CD4-positive, alpha-beta memory T cell (primary cell): ENCODE measurements at regions of chr11 and their contacts with region 1.

Region 1: DNA sequence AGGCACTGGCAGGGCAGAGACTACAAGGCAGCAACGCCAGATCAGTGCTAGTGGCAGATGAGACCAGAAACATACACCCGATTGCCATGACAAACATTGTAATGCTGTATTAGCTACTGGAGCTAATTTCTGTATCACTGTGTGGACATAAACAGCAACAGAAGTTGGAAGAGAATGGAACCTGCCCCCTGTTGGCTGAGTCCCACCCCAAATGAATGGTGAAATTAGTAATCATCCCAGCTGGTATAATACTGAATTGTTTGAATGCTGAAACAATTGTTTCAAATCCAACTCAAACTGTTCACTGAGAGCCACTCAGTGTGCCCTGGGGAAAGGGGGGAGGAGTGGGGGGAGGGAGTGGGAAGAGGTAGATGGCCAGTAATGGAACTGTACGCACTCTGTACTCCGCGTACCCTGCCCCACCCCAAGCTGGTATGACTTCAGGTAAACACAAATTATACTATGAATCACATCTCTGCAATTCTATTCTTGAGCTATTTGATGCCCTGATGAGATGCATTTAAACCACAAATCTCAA is 11.2 kb upstream of the BIRC3 start:
- DNase-seq: peak in 3 of 5 donors; percentile 35 to 74 (median 40)
- H3K4me3 ChIP-seq: peak overlapping the region; percentile 3 to 14
- H3K4me3 Mint-ChIP-seq: peak overlapping the region; percentile 51 to 77 (median 69)
- H3K27ac ChIP-seq: peak overlapping the region; percentile 60
- H3K27ac Mint-ChIP-seq: peak overlapping the region; percentile 84 to 98 (median 94)
- H3K4me1 ChIP-seq: peaks cover 87% of the 10 kb centered on the region
- H3K4me1 Mint-ChIP-seq: peaks cover 54 to 85% (median 73%) of the 10 kb centered on the region in 4 donors
- H3K27me3 ChIP-seq: no peaks in the 10 kb centered on the region
- H3K27me3 Mint-ChIP-seq: no peaks in the 10 kb centered on the region

Region 2: GRCh38 chr11:102279641-102280170 is 26.4 kb before region 1 on chr11:
- CTCF ChIA-PET with region 1: no interaction called
- POLR2A ChIA-PET with region 1: no interaction called
- intact Hi-C with region 1: no loop called
- DNase-seq: no peak
- H3K4me3 ChIP-seq: no peak overlapping the region
- H3K4me3 Mint-ChIP-seq: peak overlapping the region in 2 of 8 donors; percentile 4 to 41
- H3K27ac ChIP-seq: no peak overlapping the region
- H3K27ac Mint-ChIP-seq: no peak overlapping the region
- H3K4me1 ChIP-seq: no peaks in the 10 kb centered on the region
- H3K4me1 Mint-ChIP-seq: peaks cover 3 to 8% (median 4%) of the 10 kb centered on the region in 4 donors
- H3K27me3 ChIP-seq: no peaks in the 10 kb centered on the region
- H3K27me3 Mint-ChIP-seq: peaks cover 9 to 16% of the 10 kb centered on the region in 2 donors

Region 3: DNA sequence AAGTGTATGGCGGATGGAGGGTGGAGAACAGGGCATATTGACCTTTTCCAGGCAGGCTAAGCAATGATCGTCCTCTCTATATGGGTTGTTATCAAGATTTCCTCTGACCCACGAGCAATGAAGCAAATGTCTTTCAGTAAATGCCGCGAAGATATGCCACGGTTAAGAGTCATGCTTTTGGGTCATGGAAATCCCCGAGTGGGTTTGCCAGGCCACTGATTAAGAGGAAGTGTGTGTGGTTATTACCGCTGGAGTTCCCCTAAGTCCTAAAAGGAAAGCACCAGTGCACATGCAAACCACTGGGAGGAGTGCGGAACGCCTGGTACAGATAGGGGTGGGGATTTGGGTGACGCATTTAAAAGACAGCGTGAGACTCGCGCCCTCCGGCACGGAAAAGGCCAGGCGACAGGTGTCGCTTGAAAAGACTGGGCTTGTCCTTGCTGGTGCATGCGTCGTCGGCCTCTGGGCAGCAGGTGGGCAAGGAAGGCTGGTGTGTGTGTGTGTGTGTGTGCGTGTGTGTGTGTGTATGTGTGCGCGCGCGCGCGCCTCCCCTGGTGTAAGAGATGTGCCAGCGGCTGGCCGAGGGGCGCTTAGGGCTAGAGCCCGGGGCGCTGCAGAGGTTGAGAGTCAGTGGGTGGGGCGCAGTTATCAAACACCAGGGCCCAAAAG is 11.1 kb after region 1 on chr11 and contains the start of gene BIRC3:
- CTCF ChIA-PET with region 1: interaction called, 654 read pairs
- POLR2A ChIA-PET with region 1: interaction called, 149 read pairs
- intact Hi-C with region 1: loop called (anchors 1 kb)
- DNase-seq: peak; percentile 93 to 99 (median 96)
- H3K4me3 ChIP-seq: peak within 1 kb of the TSS; percentile 94 to 96
- H3K4me3 Mint-ChIP-seq: peak within 1 kb of the TSS; percentile 90 to 100 (median 96)
- H3K27ac ChIP-seq: peak within 1 kb of the TSS; percentile 95
- H3K27ac Mint-ChIP-seq: peak within 1 kb of the TSS; percentile 90 to 99 (median 99)
- H3K4me1 ChIP-seq: peaks cover 59% of the 10 kb centered on the region
- H3K4me1 Mint-ChIP-seq: peaks cover 46 to 81% (median 58%) of the 10 kb centered on the region in 4 donors
- H3K27me3 ChIP-seq: no peaks in the 10 kb centered on the region
- H3K27me3 Mint-ChIP-seq: no peaks in the 10 kb centered on the region
- total RNA-seq, gene BIRC3: 197 to 198 TPM

Region 4: GRCh38 chr11:102323542-102324251 is 17.6 kb after region 1 on chr11:
- CTCF ChIA-PET with region 1: interaction called, 654 read pairs
- POLR2A ChIA-PET with region 1: interaction called, 149 read pairs
- intact Hi-C with region 1: no loop called
- DNase-seq: no peak
- H3K4me3 ChIP-seq: peak overlapping the region in 1 of 2 donors; percentile 2
- H3K4me3 Mint-ChIP-seq: peak overlapping the region in 3 of 8 donors; percentile 9 to 59 (median 29)
- H3K27ac ChIP-seq: no peak overlapping the region
- H3K27ac Mint-ChIP-seq: peak overlapping the region in 5 of 7 donors; percentile 30 to 81 (median 57)
- H3K4me1 ChIP-seq: peaks cover 75% of the 10 kb centered on the region
- H3K4me1 Mint-ChIP-seq: peaks cover 37 to 72% (median 49%) of the 10 kb centered on the region in 4 donors
- H3K27me3 ChIP-seq: no peaks in the 10 kb centered on the region
- H3K27me3 Mint-ChIP-seq: no peaks in the 10 kb centered on the region